WTC11 (cell line): ENCODE measurements at regions of chr1 and their contacts with region 1.

Region 1: GRCh38 chr1:47755101-47755990 is 241.8 kb downstream of the TRABD2B start:
- DNase-seq: peak; percentile 87
- ATAC-seq: peak; percentile 78
- H3K4me3 Mint-ChIP-seq: no peak overlapping the region
- H3K27ac Mint-ChIP-seq: no peak overlapping the region
- H3K4me1 Mint-ChIP-seq: peaks cover 14% of the 10 kb centered on the region
- H3K27me3 Mint-ChIP-seq: peaks cover 33% of the 10 kb centered on the region
- CTCF ChIP-seq: peak; percentile 78

Region 2: GRCh38 chr1:47738560-47739182 is 16.7 kb before region 1 on chr1:
- CTCF ChIA-PET with region 1: interaction called, 14 read pairs
- POLR2A ChIA-PET with region 1: no interaction called
- DNase-seq: peak; percentile 79
- ATAC-seq: peak; percentile 99
- H3K4me3 Mint-ChIP-seq: no peak overlapping the region
- H3K27ac Mint-ChIP-seq: no peak overlapping the region
- H3K4me1 Mint-ChIP-seq: no peaks in the 10 kb centered on the region
- H3K27me3 Mint-ChIP-seq: peaks cover 50% of the 10 kb centered on the region
- CTCF ChIP-seq: peak; percentile 81

Region 3: DNA sequence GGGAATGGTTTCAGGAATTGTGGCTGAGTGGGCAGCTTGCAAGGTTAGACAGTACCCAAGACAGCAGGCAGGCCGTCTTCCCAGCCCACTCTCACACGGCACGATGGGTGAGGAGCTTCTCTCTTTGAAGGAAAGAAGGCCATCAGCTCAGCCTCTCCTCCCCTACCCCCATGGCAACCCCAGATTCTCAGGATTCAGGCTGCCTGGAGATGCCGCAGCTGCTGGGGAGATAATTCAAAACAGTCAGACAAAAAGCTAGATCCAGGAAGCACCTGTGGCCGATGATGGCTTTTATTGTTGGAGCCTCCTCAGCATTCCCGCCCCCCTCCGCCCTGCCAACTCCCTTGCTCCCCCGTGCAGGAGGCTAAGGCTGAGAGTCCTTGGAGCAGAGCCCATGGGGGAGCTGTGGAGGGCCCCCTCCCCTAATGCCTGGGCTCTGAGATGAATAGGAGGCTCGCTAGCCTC is 21.4 kb after region 1 on chr1:
- CTCF ChIA-PET with region 1: interaction called, 13 read pairs
- POLR2A ChIA-PET with region 1: no interaction called
- DNase-seq: no peak
- ATAC-seq: peak; percentile 50
- H3K4me3 Mint-ChIP-seq: no peak overlapping the region
- H3K27ac Mint-ChIP-seq: no peak overlapping the region
- H3K4me1 Mint-ChIP-seq: peaks cover 16% of the 10 kb centered on the region
- H3K27me3 Mint-ChIP-seq: no peaks in the 10 kb centered on the region; the same call in 1 of the 2 replicates
- CTCF ChIP-seq: no peak

Region 4: GRCh38 chr1:47791879-47792608 is 36.7 kb after region 1 on chr1:
- CTCF ChIA-PET with region 1: no interaction called
- POLR2A ChIA-PET with region 1: no interaction called
- DNase-seq: no peak
- ATAC-seq: no peak
- H3K4me3 Mint-ChIP-seq: no peak overlapping the region
- H3K27ac Mint-ChIP-seq: no peak overlapping the region
- H3K4me1 Mint-ChIP-seq: no peaks in the 10 kb centered on the region
- H3K27me3 Mint-ChIP-seq: no peaks in the 10 kb centered on the region
- CTCF ChIP-seq: no peak